Common myeloid progenitor, CD34-positive (primary cell): ENCODE measurements at regions of chr12 and their contacts with region 1.

Region 1: GRCh38 chr12:452667-453210 is 7.0 kb upstream of the B4GALNT3 start:
- DNase-seq: no peak
- H3K4me3 ChIP-seq: no peak overlapping the region
- H3K27ac ChIP-seq: no peak overlapping the region
- H3K4me1 ChIP-seq: no peaks in the 10 kb centered on the region
- H3K27me3 ChIP-seq: peaks cover 0 to 45% (median 14%) of the 10 kb centered on the region in 5 experiments

Region 2: DNA sequence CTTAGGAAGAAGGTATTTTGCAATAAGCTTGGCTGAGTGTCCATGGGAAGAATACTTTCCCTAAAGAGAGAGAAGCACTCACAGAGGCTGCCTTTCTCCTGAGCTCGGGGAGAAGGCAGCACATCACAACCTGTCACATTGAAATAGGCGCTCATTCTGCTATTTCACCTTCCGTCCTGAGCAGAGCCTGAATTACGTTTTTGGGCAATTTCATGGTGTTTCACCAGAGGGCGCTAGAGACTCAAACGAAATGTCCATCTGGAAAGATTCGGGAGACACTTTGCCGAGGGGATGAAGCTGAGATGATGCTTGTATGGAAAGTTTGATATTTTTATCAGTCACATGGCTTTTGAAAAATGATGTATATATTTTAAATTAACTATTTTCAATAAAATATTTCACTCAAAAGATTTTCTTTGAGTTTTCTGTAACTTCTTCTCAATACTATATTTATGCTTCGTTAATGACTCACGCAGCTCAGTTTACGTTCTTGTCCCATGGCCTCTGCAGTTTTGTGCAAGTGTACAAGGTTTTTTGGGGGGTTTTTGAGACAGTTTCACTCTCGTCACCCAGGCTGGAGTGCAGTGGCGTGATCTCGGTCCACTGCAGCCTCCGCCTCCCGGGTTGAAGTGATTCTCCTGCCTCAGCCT is 10.4 kb before region 1 on chr12:
- CTCF ChIA-PET with region 1: interaction called, 21 read pairs
- POLR2A ChIA-PET with region 1: no interaction called
- DNase-seq: peak; percentile 34 to 57 (median 47)
- H3K4me3 ChIP-seq: no peak overlapping the region
- H3K27ac ChIP-seq: no peak overlapping the region
- H3K4me1 ChIP-seq: no peaks in the 10 kb centered on the region
- H3K27me3 ChIP-seq: peaks cover 0 to 2% (median 0%) of the 10 kb centered on the region in 5 experiments

Region 3: DNA sequence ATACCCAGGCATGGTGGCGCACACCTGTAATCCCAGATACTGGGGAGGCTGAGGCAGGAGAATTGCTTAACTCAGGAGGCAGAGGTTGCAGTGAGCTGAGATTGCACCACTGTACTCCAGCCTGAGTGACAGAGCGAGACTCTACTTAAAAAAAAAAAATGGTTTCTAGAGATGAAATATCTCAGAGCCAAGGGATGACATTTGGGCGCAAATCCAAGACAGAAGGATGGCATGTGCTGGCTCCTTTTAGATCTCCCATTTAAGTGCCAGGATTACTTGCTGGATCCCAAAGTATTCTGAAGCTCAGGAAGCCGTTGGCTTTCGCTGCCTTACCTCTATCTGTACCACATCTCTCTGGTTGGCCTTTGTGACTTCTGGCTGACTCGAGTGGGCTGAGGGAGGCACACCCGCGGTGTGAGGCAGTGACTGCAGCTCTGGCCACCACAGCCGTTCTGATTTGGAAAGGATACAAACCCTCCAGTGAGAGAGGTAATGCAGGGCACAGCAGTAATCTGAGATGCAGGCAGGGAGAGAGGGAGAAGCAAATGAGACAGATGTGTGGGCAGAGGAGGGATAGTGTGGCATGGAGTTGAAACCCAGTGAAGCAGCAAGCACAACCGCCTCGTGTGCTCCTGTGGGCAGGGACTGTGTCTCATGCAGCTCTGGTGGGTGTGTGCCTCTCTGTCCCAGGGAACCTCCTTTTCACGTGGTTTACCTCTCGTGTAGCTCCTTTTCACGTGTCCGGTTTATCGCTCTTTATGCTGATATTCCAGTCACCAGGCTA is 11.9 kb after region 1 on chr12:
- CTCF ChIA-PET with region 1: interaction called, 15 read pairs
- POLR2A ChIA-PET with region 1: no interaction called
- DNase-seq: no peak
- H3K4me3 ChIP-seq: no peak overlapping the region
- H3K27ac ChIP-seq: no peak overlapping the region
- H3K4me1 ChIP-seq: peaks cover 0 to 9% (median 6%) of the 10 kb centered on the region in 4 experiments
- H3K27me3 ChIP-seq: peaks cover 8 to 55% (median 15%) of the 10 kb centered on the region in 5 experiments

Region 4: DNA sequence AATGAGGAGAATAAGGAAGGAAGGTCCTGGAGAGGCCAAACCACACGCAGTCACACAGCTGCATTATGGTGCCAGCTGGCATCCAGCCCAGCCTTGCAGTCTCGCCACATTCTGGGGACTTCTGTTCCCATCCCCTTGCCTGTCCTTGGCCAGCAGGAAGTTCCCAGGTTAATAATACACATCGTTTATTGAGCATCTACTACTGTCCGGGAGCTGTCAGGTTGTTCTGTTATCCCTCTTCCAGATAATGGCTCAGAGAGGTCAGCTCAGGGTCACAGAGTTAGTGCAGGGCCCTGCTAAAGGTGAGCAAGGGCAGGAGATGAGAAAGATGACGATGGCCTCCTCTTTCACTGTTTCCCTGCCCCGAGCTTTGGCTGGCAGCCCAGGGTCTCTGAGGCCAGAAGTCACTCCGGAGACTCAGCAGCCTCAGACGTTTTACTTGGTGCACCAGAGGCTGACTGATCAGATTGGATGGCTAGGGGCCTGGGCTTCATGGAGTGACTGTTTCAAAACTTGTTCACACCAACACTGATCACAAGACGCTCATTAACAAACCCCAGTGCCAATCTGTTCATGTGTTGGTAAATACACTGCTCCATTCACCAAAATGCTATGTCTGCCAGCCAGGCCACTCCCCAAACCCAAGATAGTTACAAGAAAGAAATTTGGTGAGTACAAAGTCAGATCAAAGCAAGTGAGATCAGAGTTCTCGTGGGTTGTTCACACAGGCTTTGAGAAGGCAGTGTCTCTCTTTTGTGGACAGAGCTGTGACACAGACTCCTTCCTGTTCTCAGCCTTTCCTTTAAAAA is 86.2 kb after region 1 on chr12:
- CTCF ChIA-PET with region 1: interaction called, 132 read pairs
- POLR2A ChIA-PET with region 1: no interaction called
- DNase-seq: peak; percentile 66 to 81 (median 81)
- H3K4me3 ChIP-seq: no peak overlapping the region
- H3K27ac ChIP-seq: no peak overlapping the region
- H3K4me1 ChIP-seq: peaks cover 0 to 13% (median 11%) of the 10 kb centered on the region in 4 experiments
- H3K27me3 ChIP-seq: peaks cover 0 to 11% (median 0%) of the 10 kb centered on the region in 5 experiments

Region 5: GRCh38 chr12:662566-663292 is 210.0 kb after region 1 on chr12:
- CTCF ChIA-PET with region 1: no interaction called
- POLR2A ChIA-PET with region 1: no interaction called
- DNase-seq: peak in 2 of 3 donors; percentile 35 to 37
- H3K4me3 ChIP-seq: peak overlapping the region in 4 of 7 experiments; percentile 4 to 49 (median 47)
- H3K27ac ChIP-seq: no peak overlapping the region
- H3K4me1 ChIP-seq: peaks cover 7 to 41% (median 21%) of the 10 kb centered on the region in 4 experiments
- H3K27me3 ChIP-seq: no peaks in the 10 kb centered on the region